ENCODE measurements at regions of chr10 and their contacts with region 1.

Region 1: DNA sequence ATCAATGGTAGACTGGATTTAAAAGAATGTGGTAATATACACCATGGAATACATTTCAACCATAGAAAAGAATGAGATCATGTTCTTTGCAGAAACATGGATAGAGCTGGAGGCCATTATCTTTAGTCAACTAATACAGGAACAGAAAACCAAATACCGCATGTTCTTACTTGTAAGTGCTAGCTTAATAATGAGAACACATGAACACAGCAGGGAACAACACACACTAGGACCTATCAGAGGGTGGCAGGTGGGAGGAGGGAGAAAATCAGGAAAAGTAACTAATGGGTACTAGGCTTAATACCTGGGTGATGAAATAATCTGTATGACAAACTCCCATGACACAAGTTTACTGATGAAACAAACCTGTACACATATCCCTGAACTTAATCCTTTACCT is 1435.2 kb downstream of the REEP3 start:
- DNase-seq: no peak
- ATAC-seq: no peak
- H3K4me3 ChIP-seq: no peak overlapping the region
- H3K27ac ChIP-seq: no peak overlapping the region
- H3K4me1 ChIP-seq: peaks cover 8% of the 10 kb centered on the region; the same call in 1 of the 2 replicates
- H3K27me3 ChIP-seq: no peaks in the 10 kb centered on the region
- CTCF ChIP-seq: no peak

Region 2: GRCh38 chr10:64430690-64431323 is 525.6 kb before region 1 on chr10:
- CTCF ChIA-PET with region 1: no interaction called
- POLR2A ChIA-PET with region 1: interaction called, 6 read pairs
- intact Hi-C with region 1: loop called (anchors 5 kb)
- DNase-seq: peak; percentile 81
- ATAC-seq: peak; percentile 99
- H3K4me3 ChIP-seq: no peak overlapping the region
- H3K27ac ChIP-seq: no peak overlapping the region
- H3K4me1 ChIP-seq: no peaks in the 10 kb centered on the region
- H3K27me3 ChIP-seq: no peaks in the 10 kb centered on the region
- CTCF ChIP-seq: peak; percentile 88

Region 3: DNA sequence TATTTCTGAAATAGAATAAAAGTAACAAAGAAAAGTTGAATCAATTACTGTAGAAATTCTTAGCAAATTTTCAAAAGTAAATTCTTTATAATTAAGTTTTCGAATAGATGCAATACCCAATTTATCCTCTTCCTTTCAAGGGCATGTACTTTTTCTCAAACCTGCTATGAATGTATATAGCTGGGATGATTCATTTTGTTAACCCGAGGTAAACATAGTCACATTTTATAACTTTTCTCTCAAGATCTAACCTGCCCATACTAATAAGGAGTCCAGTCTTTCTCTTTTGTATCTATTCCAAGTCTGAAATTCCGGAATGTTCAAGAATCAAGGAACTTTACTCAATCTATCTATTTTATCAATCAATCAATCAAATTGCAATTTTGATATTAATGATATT is 362.4 kb before region 1 on chr10:
- CTCF ChIA-PET with region 1: no interaction called
- POLR2A ChIA-PET with region 1: no interaction called
- intact Hi-C with region 1: loop called (anchors 10 kb)
- DNase-seq: peak; percentile 44
- ATAC-seq: peak; percentile 99
- H3K4me3 ChIP-seq: no peak overlapping the region
- H3K27ac ChIP-seq: no peak overlapping the region
- H3K4me1 ChIP-seq: no peaks in the 10 kb centered on the region
- H3K27me3 ChIP-seq: no peaks in the 10 kb centered on the region
- CTCF ChIP-seq: no peak

Region 4: GRCh38 chr10:64786979-64787378 is 169.5 kb before region 1 on chr10:
- CTCF ChIA-PET with region 1: no interaction called
- POLR2A ChIA-PET with region 1: interaction called, 13 read pairs
- intact Hi-C with region 1: no loop called
- DNase-seq: no peak
- ATAC-seq: no peak
- H3K4me3 ChIP-seq: no peak overlapping the region
- H3K27ac ChIP-seq: no peak overlapping the region
- H3K4me1 ChIP-seq: no peaks in the 10 kb centered on the region
- H3K27me3 ChIP-seq: no peaks in the 10 kb centered on the region
- CTCF ChIP-seq: no peak

Region 5: GRCh38 chr10:64873959-64874358 is 82.5 kb before region 1 on chr10:
- CTCF ChIA-PET with region 1: no interaction called
- POLR2A ChIA-PET with region 1: no interaction called
- intact Hi-C with region 1: loop called (anchors 5 kb)
- DNase-seq: no peak
- ATAC-seq: peak; percentile 12; the same call in 1 of the 2 replicates
- H3K4me3 ChIP-seq: no peak overlapping the region
- H3K27ac ChIP-seq: peak overlapping the region; percentile 40
- H3K4me1 ChIP-seq: peaks cover 14% of the 10 kb centered on the region; the same call in 1 of the 2 replicates
- H3K27me3 ChIP-seq: no peaks in the 10 kb centered on the region
- CTCF ChIP-seq: no peak